IMR-90 (cell line): ENCODE measurements at regions of chr7 and their contacts with region 1.

Region 1: DNA sequence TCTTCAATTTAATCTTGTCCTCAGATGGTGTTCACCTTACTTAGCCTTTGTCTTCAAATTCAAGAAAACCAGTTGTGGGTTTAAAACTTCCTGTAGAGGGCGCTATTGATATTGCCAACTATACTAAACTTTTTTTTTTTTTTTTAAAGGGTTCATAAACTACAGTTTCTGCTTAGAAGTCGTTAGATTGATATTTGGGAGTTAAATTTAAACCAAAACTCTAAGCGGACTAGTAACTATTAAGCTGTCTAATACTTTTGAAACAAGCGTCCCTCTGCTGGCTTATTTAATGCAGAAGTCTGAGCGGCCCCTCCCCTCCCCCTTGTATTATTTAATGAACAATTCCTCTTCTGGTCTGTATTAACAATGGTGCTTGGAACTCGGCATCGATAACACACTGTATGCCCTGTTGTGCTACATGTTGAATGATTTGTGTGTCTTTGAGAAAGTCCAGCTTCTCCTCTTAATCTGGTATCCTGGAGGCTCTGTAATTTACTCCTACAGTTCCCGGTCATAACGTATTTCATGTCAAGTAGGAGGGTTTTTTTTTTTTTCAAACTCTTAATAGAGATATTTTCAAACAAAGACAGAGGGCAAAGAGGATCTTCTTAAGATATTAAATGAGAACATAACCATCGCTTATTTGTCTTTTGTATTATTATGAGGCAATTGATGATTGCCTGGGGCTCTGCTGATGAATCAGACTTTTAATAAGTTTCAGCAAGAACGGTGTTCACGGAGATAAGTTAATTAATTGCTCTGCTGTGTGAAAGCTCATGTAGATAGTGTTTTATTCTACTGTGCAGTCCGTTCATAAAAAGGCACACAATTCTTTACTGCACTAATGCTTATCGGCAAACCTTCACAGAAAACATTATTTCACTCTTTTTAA is 22.6 kb upstream of the CREB5 start:
- DNase-seq: peak; percentile 79
- ATAC-seq: peak; percentile 75
- H3K4me3 ChIP-seq: peak overlapping the region; percentile 34; the same call in 1 of the 2 replicates
- H3K27ac ChIP-seq: no peak overlapping the region
- H3K4me1 ChIP-seq: 0 out of 2 replicates have a peak, but pooled peaks cover 2% of the 10 kb centered on the region
- H3K27me3 ChIP-seq: peaks cover 7% of the 10 kb centered on the region; the same call in 1 of the 2 replicates
- CTCF ChIP-seq: peak; percentile 80
- POLR2A ChIP-seq: no peak
- RAD21 ChIP-seq: peak; percentile 80

Region 2: GRCh38 chr7:28626624-28627262 is 237.0 kb after region 1 on chr7:
- CTCF ChIA-PET with region 1: no interaction called
- POLR2A ChIA-PET with region 1: no interaction called
- dilution Hi-C with region 1: no loop called
- in situ Hi-C with region 1: no loop called
- intact Hi-C with region 1: loop called (anchors 1 kb)
- DNase-seq: peak; percentile 36
- ATAC-seq: peak; percentile 38; the same call in 1 of the 2 replicates
- H3K4me3 ChIP-seq: no peak overlapping the region
- H3K27ac ChIP-seq: no peak overlapping the region
- H3K4me1 ChIP-seq: peaks cover 6% of the 10 kb centered on the region
- H3K27me3 ChIP-seq: no peaks in the 10 kb centered on the region
- CTCF ChIP-seq: peak; percentile 52
- POLR2A ChIP-seq: no peak
- RAD21 ChIP-seq: peak; percentile 51

Region 3: DNA sequence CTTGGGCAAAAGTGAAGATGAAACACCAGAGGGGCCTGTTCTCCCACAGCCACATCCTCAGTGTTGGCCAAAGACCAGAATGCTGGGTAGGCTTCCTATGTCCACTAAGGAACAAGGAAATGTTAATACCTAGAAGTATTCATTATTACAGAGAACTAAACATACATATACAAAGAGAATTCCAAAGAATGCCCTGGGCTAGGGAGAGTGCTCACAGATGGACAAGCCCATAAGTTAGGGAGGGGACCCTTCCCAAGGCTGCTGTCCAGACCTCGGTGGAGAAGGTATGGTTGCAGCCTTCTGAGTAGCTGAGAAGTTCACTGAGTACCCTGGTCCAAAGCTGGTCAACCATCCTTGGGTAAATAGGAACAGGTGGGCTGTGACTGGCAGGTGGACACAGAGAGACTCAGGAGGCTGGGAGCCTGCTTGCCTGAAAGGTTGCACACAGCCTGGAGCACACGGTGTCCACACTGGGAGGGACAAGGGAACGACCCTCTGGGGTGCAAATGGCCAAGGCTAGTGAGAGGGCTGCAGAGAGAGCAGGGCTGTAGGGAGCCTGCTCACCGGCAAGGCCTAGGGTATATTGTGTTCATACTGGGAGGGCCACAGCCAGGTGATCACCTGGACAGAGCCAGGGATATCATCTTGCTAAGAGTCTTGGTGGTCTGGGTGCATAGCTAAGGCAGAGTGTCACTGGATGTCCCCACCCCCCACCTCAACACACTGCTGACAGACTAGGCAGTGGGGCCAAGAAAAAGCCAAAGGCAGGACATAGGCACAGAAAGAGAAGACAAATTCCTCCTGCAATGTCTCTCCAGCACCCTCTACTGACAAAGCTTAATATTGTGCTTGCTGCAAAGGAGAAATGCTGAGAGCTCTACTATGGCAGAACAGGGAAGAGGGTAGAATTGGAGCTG is 716.3 kb after region 1 on chr7:
- CTCF ChIA-PET with region 1: no interaction called
- POLR2A ChIA-PET with region 1: no interaction called
- dilution Hi-C with region 1: no loop called
- in situ Hi-C with region 1: loop called (anchors 25 kb)
- intact Hi-C with region 1: loop called (anchors 10 kb)
- DNase-seq: peak; percentile 60
- ATAC-seq: peak; percentile 97
- H3K4me3 ChIP-seq: no peak overlapping the region
- H3K27ac ChIP-seq: no peak overlapping the region
- H3K4me1 ChIP-seq: no peaks in the 10 kb centered on the region
- H3K27me3 ChIP-seq: peaks cover 7% of the 10 kb centered on the region
- CTCF ChIP-seq: peak; percentile 87
- POLR2A ChIP-seq: no peak
- RAD21 ChIP-seq: peak; percentile 79